Activated B cell treated with CpG ODN at 0.5 μM for 24 hours (primary cell): ENCODE measurements at regions of chr6 and their contacts with region 1.

Region 1: DNA sequence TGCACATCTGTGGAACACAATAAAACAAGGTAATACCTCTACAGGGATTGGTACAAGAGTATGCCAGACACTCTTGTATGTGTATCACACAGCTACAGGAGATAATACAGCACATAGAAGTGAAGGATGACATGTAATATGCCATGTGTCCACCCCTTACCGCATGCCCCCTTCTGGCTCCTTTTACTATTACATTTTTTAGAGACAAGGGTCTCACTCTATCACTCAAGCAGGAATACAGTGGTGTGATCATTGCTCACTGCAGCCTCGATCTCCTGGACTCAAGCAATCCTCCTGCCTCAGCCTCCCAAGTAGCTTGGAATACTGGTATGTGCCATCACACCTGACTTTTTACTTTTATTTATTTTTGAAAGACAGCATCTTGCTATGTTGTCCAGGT is 4.2 kb upstream of the NCR3 start:
- DNase-seq: no peak
- ATAC-seq: peak; percentile 73
- H3K4me3 Mint-ChIP-seq: peak overlapping the region; percentile 25
- H3K27ac Mint-ChIP-seq: peak overlapping the region; percentile 75
- H3K4me1 Mint-ChIP-seq: peaks cover 58% of the 10 kb centered on the region
- H3K27me3 Mint-ChIP-seq: no peaks in the 10 kb centered on the region
- CTCF ChIP-seq: no peak

Region 2: GRCh38 chr6:31493875-31494694 is 102.9 kb before region 1 on chr6:
- CTCF ChIA-PET with region 1: interaction called, 21 read pairs
- POLR2A ChIA-PET with region 1: interaction called, 5 read pairs
- intact Hi-C with region 1: loop called (anchors 1 kb)
- DNase-seq: peak; percentile 76
- ATAC-seq: peak; percentile 48
- H3K4me3 Mint-ChIP-seq: peak overlapping the region; percentile 90
- H3K27ac Mint-ChIP-seq: peak overlapping the region; percentile 92
- H3K4me1 Mint-ChIP-seq: peaks cover 54% of the 10 kb centered on the region
- H3K27me3 Mint-ChIP-seq: no peaks in the 10 kb centered on the region
- CTCF ChIP-seq: no peak

Region 3: GRCh38 chr6:31559958-31560696 is 36.9 kb before region 1 on chr6:
- CTCF ChIA-PET with region 1: interaction called, 773 read pairs
- POLR2A ChIA-PET with region 1: interaction called, 1,155 read pairs
- intact Hi-C with region 1: no loop called
- DNase-seq: peak; percentile 52
- ATAC-seq: peak; percentile 67
- H3K4me3 Mint-ChIP-seq: peak overlapping the region; percentile 83
- H3K27ac Mint-ChIP-seq: peak overlapping the region; percentile 94
- H3K4me1 Mint-ChIP-seq: peaks cover 90% of the 10 kb centered on the region
- H3K27me3 Mint-ChIP-seq: no peaks in the 10 kb centered on the region
- CTCF ChIP-seq: no peak

Region 4: GRCh38 chr6:31568537-31568961 is 28.5 kb before region 1 on chr6:
- CTCF ChIA-PET with region 1: interaction called, 577 read pairs
- POLR2A ChIA-PET with region 1: interaction called, 1,155 read pairs
- intact Hi-C with region 1: no loop called
- DNase-seq: peak; percentile 39
- ATAC-seq: peak; percentile 71
- H3K4me3 Mint-ChIP-seq: peak overlapping the region; percentile 45
- H3K27ac Mint-ChIP-seq: peak overlapping the region; percentile 93
- H3K4me1 Mint-ChIP-seq: peaks cover 84% of the 10 kb centered on the region
- H3K27me3 Mint-ChIP-seq: no peaks in the 10 kb centered on the region
- CTCF ChIP-seq: no peak

Region 5: DNA sequence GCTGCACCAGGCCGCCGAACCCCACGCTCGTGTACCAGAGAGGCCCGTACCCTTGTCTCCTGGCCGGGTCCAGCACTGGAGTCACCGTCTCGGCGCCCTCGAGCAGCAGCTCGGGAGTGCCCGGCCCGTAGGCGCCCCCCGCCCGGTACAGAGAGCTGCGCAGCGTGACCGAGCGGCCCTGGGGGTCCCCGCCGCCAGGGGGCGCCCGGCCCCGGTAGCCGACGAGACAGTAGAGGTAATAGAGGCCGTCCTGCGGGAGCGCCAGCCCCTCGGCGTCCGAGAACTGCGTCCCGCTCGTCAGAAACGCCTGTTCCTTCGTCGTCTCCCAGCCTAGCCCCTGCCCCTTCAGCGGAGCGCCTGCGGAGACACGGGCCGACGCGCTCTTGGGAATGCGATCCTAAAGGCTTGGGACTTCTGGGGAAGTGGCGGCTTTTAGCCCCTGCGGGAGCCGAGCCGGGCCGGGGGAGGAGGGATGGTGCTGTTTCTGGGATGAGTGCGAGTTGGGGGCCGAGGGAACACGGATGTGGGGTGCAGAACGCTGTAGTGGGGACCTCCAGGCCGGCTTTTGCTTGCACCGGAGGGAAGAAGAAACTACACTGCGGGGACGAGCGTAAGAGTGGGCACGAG is 16.1 kb before region 1 on chr6:
- CTCF ChIA-PET with region 1: interaction called, 577 read pairs
- POLR2A ChIA-PET with region 1: interaction called, 1,155 read pairs
- intact Hi-C with region 1: loop called (anchors 1 kb)
- DNase-seq: peak; percentile 94
- ATAC-seq: peak; percentile 71
- H3K4me3 Mint-ChIP-seq: peak overlapping the region; percentile 99
- H3K27ac Mint-ChIP-seq: peak overlapping the region; percentile 94
- H3K4me1 Mint-ChIP-seq: peaks cover 83% of the 10 kb centered on the region
- H3K27me3 Mint-ChIP-seq: no peaks in the 10 kb centered on the region
- CTCF ChIP-seq: peak; percentile 91

Region 6: GRCh38 chr6:31609519-31610406 is 12.8 kb after region 1 on chr6:
- CTCF ChIA-PET with region 1: interaction called, 17 read pairs
- POLR2A ChIA-PET with region 1: interaction called, 10 read pairs
- intact Hi-C with region 1: no loop called
- DNase-seq: no peak
- ATAC-seq: no peak
- H3K4me3 Mint-ChIP-seq: no peak overlapping the region
- H3K27ac Mint-ChIP-seq: no peak overlapping the region
- H3K4me1 Mint-ChIP-seq: peaks cover 13% of the 10 kb centered on the region
- H3K27me3 Mint-ChIP-seq: no peaks in the 10 kb centered on the region
- CTCF ChIP-seq: no peak

Region 7: GRCh38 chr6:31614684-31615578 is 17.9 kb after region 1 on chr6 and contains the start of gene AIF1:
- CTCF ChIA-PET with region 1: interaction called, 17 read pairs
- POLR2A ChIA-PET with region 1: interaction called, 10 read pairs
- intact Hi-C with region 1: no loop called
- DNase-seq: no peak
- ATAC-seq: peak; percentile 38
- H3K4me3 Mint-ChIP-seq: peak within 1 kb of the TSS; percentile 44
- H3K27ac Mint-ChIP-seq: peak within 1 kb of the TSS; percentile 80
- H3K4me1 Mint-ChIP-seq: peaks cover 40% of the 10 kb centered on the region
- H3K27me3 Mint-ChIP-seq: no peaks in the 10 kb centered on the region
- CTCF ChIP-seq: no peak
- total RNA-seq, gene AIF1: 1.4 and 2.0 TPM in 2 replicates